Left cardiac atrium (tissue), 4 donors: ENCODE measurements at regions of chr6 and their contacts with region 1.

Region 1: GRCh38 chr6:74075323-74075722 is 379.3 kb downstream of the CD109 start:
- DNase-seq: peak; percentile 47
- ATAC-seq: peak; percentile 64 to 67

Region 2: GRCh38 chr6:73768558-73768957 is 306.8 kb before region 1 on chr6:
- intact Hi-C with region 1: no loop called
- DNase-seq: no peak
- ATAC-seq: no peak

Region 3: DNA sequence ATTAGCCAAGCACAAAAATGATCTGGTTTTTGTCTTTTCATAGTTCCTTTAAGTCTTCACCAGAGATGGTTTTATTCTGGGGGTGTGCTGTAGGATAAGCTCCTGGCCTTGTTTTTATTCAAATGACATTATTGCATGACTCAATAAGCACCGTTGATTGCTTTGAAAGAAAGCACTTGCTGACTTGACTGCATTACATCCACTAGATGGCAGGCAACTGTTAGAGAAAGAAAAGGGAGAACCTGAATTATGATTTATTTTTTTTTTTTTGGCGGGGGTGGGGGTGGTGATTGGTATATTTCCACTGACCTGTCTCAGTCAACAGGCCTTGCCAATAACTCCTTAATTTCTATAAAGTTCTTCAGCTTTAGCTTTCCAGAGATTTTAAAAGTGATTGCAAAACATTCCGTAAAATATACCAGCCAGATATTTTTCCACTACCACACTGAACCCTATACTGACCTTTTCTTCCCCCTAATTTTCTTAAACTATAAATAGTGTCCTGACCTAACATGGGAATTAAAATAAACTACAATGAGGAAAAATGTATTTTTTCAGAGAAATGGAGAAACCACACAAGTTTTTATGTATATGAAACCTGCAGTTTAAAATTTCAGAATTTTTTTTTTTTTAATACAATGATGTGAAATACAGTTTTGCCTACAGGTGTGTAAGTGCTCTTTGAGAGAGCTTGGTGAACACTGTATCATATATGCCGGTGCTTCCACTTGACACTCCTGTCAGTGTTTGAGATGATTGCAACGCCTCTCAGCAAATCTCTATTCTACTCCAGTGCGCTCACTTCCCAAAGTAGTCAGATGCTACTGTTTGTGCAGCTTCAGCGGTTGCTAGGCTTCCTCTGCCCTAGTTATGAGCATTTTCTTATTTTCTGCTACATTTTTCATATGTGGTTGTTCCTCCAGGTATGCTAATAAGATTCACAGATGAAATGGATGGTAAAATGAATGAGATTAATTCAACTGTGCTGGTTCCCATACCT is 105.1 kb before region 1 on chr6:
- intact Hi-C with region 1: loop called in 1 of 2 experiments (anchors 10 kb)
- DNase-seq: no peak
- ATAC-seq: peak in 1 of 2 donors; percentile 57

Region 4: GRCh38 chr6:74152096-74152675 is 76.9 kb after region 1 on chr6:
- intact Hi-C with region 1: no loop called
- DNase-seq: no peak
- ATAC-seq: no peak